CD8-positive, alpha-beta memory T cell (primary cell): ENCODE measurements at regions of chr6 and their contacts with region 1.

Region 1: DNA sequence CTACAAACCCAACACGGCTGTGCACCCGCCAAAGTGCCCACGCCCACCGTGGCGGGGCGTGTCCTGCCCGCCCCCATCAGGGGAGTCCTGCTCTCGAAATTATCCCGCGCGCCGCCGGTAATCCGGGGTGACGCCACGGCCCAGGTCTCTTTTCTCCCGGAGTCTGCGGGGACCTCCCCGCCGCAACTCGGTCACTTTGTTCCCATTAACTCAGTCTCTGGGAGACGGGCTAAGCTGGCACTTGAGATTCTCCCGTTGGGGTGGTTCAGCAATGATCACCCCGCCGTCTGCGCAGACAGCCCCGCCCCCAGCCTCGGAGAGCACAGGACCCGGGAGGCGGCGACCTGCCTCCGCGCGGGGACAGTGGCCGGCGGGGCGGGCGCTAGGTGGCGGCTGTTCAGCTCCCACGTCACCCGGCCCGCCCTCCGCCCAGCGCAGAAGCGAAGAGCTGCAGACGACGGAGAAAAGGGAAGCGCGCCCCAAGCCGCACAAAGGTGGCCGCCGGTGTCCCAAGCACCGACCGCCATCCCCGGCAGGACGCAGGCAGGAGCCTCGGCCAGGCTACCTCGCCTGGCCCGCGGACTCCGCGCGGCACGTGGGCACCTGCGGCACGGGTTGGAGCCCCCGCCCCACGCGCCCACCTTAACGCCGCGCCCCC is 31.5 kb downstream of the SF3B5 start:
- DNase-seq: peak; percentile 88 to 94 (median 90)
- H3K4me3 ChIP-seq: peak overlapping the region; percentile 88
- H3K4me3 Mint-ChIP-seq: peak overlapping the region; percentile 84 to 97 (median 90)
- H3K27ac ChIP-seq: peak overlapping the region; percentile 82
- H3K27ac Mint-ChIP-seq: peak overlapping the region; percentile 82 to 99 (median 95)
- H3K4me1 ChIP-seq: peaks cover 11% of the 10 kb centered on the region
- H3K4me1 Mint-ChIP-seq: peaks cover 24 to 34% (median 26%) of the 10 kb centered on the region in 3 donors
- H3K27me3 ChIP-seq: no peaks in the 10 kb centered on the region
- H3K27me3 Mint-ChIP-seq: no peaks in the 10 kb centered on the region

Region 2: DNA sequence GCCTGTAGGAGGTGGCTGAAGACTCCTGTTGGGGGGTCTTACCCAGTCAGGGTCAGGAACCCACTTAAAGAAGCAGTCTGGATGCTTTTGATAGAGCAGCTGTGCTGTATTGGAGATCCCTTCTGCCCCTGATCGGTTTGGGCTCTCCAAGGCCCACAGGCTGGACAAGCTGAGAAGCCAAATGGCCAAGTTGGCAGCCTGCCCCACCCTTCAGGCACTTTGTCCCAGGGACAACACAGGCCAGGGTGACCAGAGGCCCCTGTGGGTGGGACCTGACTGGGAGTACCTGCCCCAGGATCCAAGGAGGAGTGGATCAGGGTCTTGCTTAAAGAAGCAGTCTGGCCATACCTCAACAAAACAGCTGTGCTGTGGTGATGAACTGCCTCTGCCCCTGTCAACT is 151.2 kb before region 1 on chr6:
- CTCF ChIA-PET with region 1: no interaction called
- POLR2A ChIA-PET with region 1: no interaction called
- DNase-seq: no peak
- H3K4me3 ChIP-seq: no peak overlapping the region
- H3K4me3 Mint-ChIP-seq: no peak overlapping the region
- H3K27ac ChIP-seq: no peak overlapping the region
- H3K27ac Mint-ChIP-seq: no peak overlapping the region
- H3K4me1 ChIP-seq: no peaks in the 10 kb centered on the region
- H3K4me1 Mint-ChIP-seq: no peaks in the 10 kb centered on the region
- H3K27me3 ChIP-seq: no peaks in the 10 kb centered on the region
- H3K27me3 Mint-ChIP-seq: peaks cover 9 to 12% of the 10 kb centered on the region in 2 donors

Region 3: DNA sequence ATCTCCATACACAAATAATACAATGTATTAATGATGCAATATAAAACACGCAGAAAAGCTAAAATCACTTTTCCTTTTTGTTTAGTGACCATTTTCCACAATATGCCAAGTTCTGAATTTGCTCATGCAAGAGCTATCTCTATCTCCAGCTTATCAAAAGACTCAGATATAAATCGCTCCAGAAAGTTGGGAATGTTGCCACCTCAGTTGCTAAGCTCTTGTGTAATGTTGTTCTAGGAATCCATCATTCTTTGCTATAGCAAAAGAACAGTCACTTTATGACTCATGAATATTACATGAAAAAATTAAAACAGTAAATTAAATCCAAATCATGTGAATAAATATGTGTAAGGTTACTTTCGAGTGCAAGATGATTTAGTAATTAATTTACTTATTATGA is 64.5 kb before region 1 on chr6:
- CTCF ChIA-PET with region 1: no interaction called
- POLR2A ChIA-PET with region 1: no interaction called
- DNase-seq: no peak
- H3K4me3 ChIP-seq: no peak overlapping the region
- H3K4me3 Mint-ChIP-seq: no peak overlapping the region
- H3K27ac ChIP-seq: no peak overlapping the region
- H3K27ac Mint-ChIP-seq: no peak overlapping the region
- H3K4me1 ChIP-seq: no peaks in the 10 kb centered on the region
- H3K4me1 Mint-ChIP-seq: no peaks in the 10 kb centered on the region
- H3K27me3 ChIP-seq: no peaks in the 10 kb centered on the region
- H3K27me3 Mint-ChIP-seq: peaks cover 0 to 6% of the 10 kb centered on the region in 2 donors

Region 4: GRCh38 chr6:144095331-144096002 is 31.6 kb after region 1 on chr6 and contains the start of gene SF3B5:
- CTCF ChIA-PET with region 1: interaction called, 5 read pairs
- POLR2A ChIA-PET with region 1: interaction called, 26 read pairs
- DNase-seq: peak; percentile 94 to 99 (median 96)
- H3K4me3 ChIP-seq: peak within 1 kb of the TSS; percentile 99
- H3K4me3 Mint-ChIP-seq: peak within 1 kb of the TSS; percentile 97 to 100 (median 99)
- H3K27ac ChIP-seq: peak within 1 kb of the TSS; percentile 99
- H3K27ac Mint-ChIP-seq: peak within 1 kb of the TSS; percentile 96 to 100 (median 99)
- H3K4me1 ChIP-seq: peaks cover 23% of the 10 kb centered on the region
- H3K4me1 Mint-ChIP-seq: peaks cover 22 to 33% (median 27%) of the 10 kb centered on the region in 3 donors
- H3K27me3 ChIP-seq: no peaks in the 10 kb centered on the region
- H3K27me3 Mint-ChIP-seq: no peaks in the 10 kb centered on the region
- total RNA-seq, gene SF3B5: 265 TPM

Region 5: GRCh38 chr6:145588981-145589380 is 1525.1 kb after region 1 on chr6:
- CTCF ChIA-PET with region 1: no interaction called
- POLR2A ChIA-PET with region 1: no interaction called
- DNase-seq: no peak
- H3K4me3 ChIP-seq: no peak overlapping the region
- H3K4me3 Mint-ChIP-seq: no peak overlapping the region
- H3K27ac ChIP-seq: no peak overlapping the region
- H3K27ac Mint-ChIP-seq: no peak overlapping the region
- H3K4me1 ChIP-seq: no peaks in the 10 kb centered on the region
- H3K4me1 Mint-ChIP-seq: no peaks in the 10 kb centered on the region
- H3K27me3 ChIP-seq: no peaks in the 10 kb centered on the region
- H3K27me3 Mint-ChIP-seq: peaks cover 5 to 16% of the 10 kb centered on the region in 2 donors